Activated T-helper 1 cell treated with anti-CD3 and anti-CD28 coated beads, Interleukin-12 subunit alpha, Interleukin-12 subunit beta, Interleukin-2, Interleukin-4 antibody, amounts not matched to agents 30 ng/mL and 10 ng/mL and 1 ng/mL, durations not matched to agents 14 hours and 24 hours and 36 hours (primary cell): ENCODE measurements at regions of chr13 and their contacts with region 1.

Region 1: DNA sequence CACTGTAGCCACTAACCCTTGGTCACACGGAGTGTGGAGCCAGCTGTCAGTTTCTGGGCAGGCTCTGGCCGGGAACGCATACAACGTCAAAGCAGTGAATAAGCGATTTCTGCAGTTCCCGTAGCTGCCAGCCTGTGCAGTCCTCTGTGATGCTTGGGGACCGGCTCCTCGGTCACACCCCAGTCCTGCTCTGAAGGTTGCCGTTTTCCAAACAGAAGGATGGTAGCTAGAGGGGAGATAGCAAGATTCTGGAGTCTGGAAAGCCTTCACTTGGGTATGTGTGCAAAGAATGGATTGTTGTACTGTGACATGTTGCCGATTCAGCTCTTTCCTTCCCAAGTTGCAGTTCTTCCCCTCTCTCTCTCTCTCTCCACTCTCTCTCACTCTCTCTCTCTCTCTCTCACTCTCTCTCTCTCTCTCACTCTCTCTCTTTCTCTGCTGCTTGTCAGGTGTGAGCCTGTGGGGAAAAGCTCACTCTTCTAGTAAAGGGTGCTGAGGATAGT is 38.7 kb upstream of the C1QTNF9 start:
- DNase-seq: peak; percentile 54
- H3K4me3 Mint-ChIP-seq: peak overlapping the region; percentile 88
- H3K27ac Mint-ChIP-seq: peak overlapping the region; percentile 93
- H3K4me1 Mint-ChIP-seq: peaks cover 82% of the 10 kb centered on the region
- H3K27me3 Mint-ChIP-seq: no peaks in the 10 kb centered on the region

Region 2: DNA sequence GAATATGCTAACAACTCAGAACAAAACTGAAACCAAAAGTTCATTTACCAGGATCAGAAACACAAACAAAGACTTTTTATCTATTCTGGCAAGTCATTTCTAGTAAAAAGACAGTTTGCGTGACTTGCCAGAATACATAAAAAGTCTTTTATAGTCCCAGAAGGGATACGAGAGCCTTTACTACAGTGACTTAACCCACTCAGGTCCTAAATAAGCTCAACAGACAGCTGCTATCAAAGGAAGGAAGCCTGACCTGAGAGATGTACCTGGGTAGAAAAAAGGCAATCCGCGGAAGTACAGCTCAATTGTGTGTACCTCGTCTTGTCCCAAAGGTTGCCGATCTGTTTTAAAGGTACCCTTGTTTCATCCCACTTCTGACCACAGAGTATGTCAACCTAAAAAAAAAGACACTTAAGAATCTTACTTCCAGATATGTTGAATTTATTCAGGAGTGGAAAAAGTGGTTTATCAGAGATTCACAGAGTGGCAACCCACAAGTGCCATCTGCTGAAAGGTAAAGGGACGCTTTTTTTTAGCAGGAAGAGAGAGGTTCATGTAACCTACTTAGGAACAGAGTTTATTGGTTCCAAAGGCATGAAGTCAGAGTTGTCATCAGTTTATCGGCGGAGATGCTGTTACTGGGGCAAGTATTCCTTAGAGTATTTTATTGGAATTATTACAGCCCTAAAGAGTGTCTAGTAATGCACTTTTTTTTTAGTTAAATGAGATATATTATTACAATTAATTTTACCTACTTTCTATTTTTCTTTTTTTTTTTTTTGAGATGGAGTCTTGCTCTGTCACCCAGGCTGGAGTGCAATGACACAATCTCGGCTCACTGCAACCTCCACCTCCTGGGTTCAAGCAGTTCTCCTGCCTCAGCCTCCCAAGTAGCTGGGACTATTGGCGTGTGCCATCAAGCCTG is 303.7 kb before region 1 on chr13:
- intact Hi-C with region 1: loop called (anchors 1 kb)
- DNase-seq: peak; percentile 40
- H3K4me3 Mint-ChIP-seq: peak overlapping the region; percentile 77
- H3K27ac Mint-ChIP-seq: peak overlapping the region; percentile 86
- H3K4me1 Mint-ChIP-seq: peaks cover 47% of the 10 kb centered on the region
- H3K27me3 Mint-ChIP-seq: no peaks in the 10 kb centered on the region

Region 3: DNA sequence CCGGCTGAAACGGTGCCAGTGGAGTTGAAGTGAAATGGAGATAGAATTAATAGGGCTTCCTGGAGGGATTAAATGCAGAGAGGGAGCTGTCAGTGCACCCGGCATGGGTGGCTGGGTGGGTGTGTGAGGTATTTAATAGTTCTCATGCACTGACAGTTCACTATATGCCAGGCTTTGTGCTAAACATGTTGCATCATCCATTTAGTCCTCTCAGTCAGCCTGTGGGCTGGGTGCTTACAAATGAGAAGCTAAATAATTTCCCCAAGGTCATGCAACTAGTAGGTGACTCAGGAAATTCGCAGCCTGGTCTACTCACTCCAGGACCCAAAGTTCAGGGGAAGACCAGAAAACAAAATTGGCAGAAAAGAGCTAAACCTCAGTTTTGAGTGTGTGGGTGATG is 173.6 kb before region 1 on chr13:
- intact Hi-C with region 1: loop called (anchors 1 kb)
- DNase-seq: peak; percentile 7
- H3K4me3 Mint-ChIP-seq: peak overlapping the region; percentile 62
- H3K27ac Mint-ChIP-seq: peak overlapping the region; percentile 95
- H3K4me1 Mint-ChIP-seq: peaks cover 21% of the 10 kb centered on the region
- H3K27me3 Mint-ChIP-seq: peaks cover 15% of the 10 kb centered on the region

Region 4: DNA sequence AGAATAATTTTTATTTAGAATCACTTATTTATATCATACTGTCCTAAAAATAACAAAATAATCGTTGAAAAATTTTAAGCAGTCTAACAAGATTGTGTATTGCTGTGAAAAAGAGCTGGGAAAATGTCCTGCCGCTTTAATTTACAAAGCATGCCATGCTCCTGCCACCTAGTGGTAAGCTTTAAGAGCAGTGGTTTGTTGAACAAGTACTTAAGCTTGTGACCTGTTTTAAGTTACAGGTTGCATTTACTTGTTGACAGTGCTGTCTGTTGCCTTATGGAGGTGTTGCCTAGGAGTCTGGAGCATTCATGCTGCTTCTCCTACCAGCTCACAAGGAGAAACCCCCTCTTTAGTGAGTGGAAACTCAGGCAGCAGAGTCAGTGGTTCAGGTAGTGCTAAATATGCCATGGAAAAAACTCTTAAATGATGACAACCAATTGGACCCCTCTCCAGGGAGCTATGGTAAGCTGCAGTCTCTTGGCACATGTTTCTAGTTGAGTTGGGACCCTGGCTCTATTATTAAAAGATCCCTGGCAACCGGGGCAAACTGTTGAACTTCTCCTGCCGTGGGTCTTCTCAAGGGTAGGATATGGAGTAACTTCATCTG is 41.7 kb before region 1 on chr13:
- intact Hi-C with region 1: loop called (anchors 1 kb)
- DNase-seq: no peak
- H3K4me3 Mint-ChIP-seq: no peak overlapping the region
- H3K27ac Mint-ChIP-seq: peak overlapping the region; percentile 40
- H3K4me1 Mint-ChIP-seq: peaks cover 56% of the 10 kb centered on the region
- H3K27me3 Mint-ChIP-seq: no peaks in the 10 kb centered on the region

Region 5: DNA sequence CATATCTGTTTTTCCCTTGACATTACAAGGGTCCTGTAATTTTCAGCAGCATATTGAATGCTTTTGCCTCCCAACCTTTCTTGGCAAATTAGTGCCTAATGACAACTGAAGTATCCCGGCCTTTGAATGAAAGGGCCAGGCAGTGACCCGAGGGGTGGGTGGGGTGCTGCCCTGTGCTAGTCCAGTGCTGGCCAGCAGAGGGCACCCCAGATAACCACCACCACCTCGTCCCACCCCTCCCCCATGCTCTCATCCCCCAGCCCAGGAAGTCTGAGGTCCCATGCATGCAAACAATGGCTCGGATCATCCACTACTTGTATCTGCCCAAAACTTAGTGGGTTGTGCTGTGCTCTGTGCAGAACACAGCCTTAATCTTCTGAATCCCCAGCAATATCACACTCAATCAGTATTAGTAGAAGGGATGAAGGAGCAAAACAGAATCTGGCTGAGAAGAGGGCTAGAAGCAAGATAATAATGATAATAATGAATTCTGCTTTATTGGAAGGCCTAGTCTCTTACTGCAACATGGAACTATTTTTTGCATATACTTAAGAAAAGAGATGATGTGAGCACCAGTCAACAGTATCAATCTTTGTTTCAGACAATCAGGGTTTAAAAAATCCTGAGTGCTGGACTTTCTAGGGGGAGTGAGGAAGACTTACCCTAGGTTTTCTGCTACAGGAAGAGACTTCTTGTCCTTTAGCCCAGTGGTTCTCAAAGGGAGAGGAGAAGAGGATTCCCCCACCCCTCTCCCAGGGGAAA is 413.3 kb after region 1 on chr13:
- intact Hi-C with region 1: loop called (anchors 10 kb)
- DNase-seq: peak; percentile 30
- H3K4me3 Mint-ChIP-seq: peak overlapping the region; percentile 28
- H3K27ac Mint-ChIP-seq: peak overlapping the region; percentile 57
- H3K4me1 Mint-ChIP-seq: peaks cover 32% of the 10 kb centered on the region
- H3K27me3 Mint-ChIP-seq: peaks cover 45% of the 10 kb centered on the region

Region 6: DNA sequence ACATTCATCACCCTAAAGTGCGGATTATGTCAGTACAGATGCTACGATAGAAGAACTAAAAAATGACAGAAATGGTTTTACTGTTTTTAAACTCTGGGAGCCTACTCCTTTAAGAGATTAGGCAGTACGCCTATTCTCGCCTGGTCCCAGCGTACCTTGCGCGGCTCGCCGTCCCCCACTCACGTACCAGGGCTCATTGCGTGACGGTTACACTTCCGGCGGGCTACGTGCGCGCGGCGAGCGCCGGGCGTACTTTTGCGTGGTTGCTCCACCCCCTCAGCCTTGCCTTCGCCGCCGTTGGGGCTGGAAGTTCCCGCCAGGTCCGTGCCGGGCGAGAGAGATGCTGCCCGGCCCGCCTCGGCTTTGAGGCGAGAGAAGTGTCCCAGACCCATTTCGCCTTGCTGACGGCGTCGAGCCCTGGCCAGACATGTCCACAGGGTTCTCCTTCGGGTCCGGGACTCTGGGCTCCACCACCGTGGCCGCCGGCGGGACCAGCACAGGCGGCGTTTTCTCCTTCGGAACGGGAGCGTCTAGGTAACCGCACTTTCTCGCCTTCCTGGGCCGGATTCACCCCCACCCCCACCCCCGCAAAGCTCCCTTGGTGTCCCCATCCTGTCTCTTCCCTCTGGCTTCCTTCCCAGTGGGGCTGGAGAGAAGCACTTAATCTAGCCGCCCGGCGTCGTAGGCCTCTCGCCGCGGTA is 1030.8 kb after region 1 on chr13 and contains the start of gene NUP58:
- intact Hi-C with region 1: loop called (anchors 1 kb)
- DNase-seq: peak; percentile 94
- H3K4me3 Mint-ChIP-seq: peak within 1 kb of the TSS; percentile 96
- H3K27ac Mint-ChIP-seq: peak within 1 kb of the TSS; percentile 94
- H3K4me1 Mint-ChIP-seq: peaks cover 35% of the 10 kb centered on the region
- H3K27me3 Mint-ChIP-seq: peaks cover 5% of the 10 kb centered on the region
- total RNA-seq, gene NUP58: 131 and 142 TPM in 2 replicates